Activated B cell treated with CpG ODN at 0.5 μM for 24 hours (primary cell): ENCODE measurements at regions of chr14 and their contacts with region 1.

Region 1: GRCh38 chr14:100192672-100193416 is 33.4 kb upstream of the DEGS2 start:
- DNase-seq: peak; percentile 98
- ATAC-seq: peak; percentile 99
- H3K4me3 Mint-ChIP-seq: peak overlapping the region; percentile 75
- H3K27ac Mint-ChIP-seq: peak overlapping the region; percentile 85
- H3K4me1 Mint-ChIP-seq: peaks cover 5% of the 10 kb centered on the region
- H3K27me3 Mint-ChIP-seq: no peaks in the 10 kb centered on the region
- CTCF ChIP-seq: no peak

Region 2: DNA sequence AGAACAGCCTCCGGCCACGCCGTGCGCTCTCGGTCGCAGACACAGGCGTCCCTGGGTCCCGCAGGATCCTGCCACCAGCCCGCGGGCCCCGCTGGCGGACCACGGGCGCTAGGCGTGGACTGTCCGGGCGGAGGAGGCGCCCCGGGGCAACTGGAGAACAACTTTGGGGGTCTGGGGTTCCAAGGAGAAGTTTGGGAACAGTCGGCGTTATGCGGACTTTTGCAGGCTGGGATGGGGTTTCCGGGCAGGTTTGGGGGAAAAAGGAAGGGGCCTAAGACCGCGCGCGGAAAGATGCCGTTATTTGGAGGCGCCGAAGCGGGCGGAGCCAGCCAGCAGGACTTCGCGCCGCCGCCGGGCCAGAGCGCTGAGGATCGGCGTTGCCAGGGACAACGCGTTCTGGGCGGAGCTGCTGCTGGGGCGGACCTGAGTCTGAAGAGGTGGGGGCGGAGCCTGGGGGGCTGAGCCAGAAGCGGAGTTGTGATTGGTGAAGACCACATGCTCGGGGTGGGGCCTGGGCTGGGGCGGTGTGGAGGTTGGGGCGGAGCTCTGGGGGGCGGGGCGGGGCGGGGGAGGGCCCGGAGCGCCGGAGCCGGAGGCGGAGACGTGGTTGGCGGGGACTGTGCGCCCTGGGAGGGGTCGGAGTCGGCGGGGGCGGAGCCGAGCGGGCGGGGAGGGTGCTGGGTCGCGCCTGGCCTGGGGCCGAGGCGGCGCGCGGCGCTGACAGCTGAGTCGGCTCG is 509.1 kb before region 1 on chr14 and contains the start of gene CYP46A1:
- CTCF ChIA-PET with region 1: no interaction called
- POLR2A ChIA-PET with region 1: interaction called, 5 read pairs
- intact Hi-C with region 1: loop called (anchors 2 kb)
- DNase-seq: peak; percentile 98
- ATAC-seq: peak; percentile 96
- H3K4me3 Mint-ChIP-seq: peak within 1 kb of the TSS; percentile 92
- H3K27ac Mint-ChIP-seq: peak within 1 kb of the TSS; percentile 86
- H3K4me1 Mint-ChIP-seq: peaks cover 26% of the 10 kb centered on the region
- H3K27me3 Mint-ChIP-seq: peaks cover 34% of the 10 kb centered on the region
- CTCF ChIP-seq: no peak
- total RNA-seq, gene CYP46A1: 0.07 TPM in 1 of 2 replicates, not detected in the other

Region 3: DNA sequence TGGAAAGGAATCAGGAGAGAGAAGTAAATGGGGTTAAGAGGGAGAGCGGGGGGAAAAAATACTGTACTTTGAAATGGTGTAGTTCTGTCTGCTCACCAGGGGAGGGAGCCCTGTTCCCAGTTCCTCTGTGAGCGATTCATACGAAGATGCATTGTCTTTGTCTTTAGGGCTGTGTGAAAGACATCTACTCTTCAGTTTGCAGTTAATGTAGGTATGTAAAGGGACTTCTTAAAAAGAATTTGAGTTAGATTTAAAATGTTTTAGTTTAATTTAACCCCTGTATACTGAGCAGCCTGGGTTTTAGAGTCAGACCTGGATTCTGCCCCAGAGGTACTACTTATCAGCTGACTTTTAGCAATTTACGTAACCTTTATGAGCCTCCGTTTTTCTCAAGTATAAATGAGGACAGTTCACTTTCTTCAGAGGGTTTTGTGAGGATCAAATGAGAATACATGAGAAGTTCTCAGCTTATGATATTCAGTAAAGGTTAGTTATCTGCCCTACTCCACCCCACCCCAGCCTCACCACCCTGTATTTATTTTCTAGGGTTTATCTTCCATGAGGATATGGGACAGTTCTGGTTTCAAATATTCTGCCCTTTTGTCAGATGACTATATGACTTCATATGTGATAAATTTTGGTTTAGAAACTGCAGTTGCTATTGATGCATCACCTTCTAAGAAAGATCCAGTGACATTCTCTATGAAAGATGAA is 210.2 kb before region 1 on chr14:
- CTCF ChIA-PET with region 1: interaction called, 36 read pairs
- POLR2A ChIA-PET with region 1: interaction called, 4 read pairs
- intact Hi-C with region 1: loop called (anchors 1 kb)
- DNase-seq: no peak
- ATAC-seq: peak; percentile 98
- H3K4me3 Mint-ChIP-seq: no peak overlapping the region
- H3K27ac Mint-ChIP-seq: no peak overlapping the region
- H3K4me1 Mint-ChIP-seq: no peaks in the 10 kb centered on the region
- H3K27me3 Mint-ChIP-seq: no peaks in the 10 kb centered on the region
- CTCF ChIP-seq: peak; percentile 88

Region 4: DNA sequence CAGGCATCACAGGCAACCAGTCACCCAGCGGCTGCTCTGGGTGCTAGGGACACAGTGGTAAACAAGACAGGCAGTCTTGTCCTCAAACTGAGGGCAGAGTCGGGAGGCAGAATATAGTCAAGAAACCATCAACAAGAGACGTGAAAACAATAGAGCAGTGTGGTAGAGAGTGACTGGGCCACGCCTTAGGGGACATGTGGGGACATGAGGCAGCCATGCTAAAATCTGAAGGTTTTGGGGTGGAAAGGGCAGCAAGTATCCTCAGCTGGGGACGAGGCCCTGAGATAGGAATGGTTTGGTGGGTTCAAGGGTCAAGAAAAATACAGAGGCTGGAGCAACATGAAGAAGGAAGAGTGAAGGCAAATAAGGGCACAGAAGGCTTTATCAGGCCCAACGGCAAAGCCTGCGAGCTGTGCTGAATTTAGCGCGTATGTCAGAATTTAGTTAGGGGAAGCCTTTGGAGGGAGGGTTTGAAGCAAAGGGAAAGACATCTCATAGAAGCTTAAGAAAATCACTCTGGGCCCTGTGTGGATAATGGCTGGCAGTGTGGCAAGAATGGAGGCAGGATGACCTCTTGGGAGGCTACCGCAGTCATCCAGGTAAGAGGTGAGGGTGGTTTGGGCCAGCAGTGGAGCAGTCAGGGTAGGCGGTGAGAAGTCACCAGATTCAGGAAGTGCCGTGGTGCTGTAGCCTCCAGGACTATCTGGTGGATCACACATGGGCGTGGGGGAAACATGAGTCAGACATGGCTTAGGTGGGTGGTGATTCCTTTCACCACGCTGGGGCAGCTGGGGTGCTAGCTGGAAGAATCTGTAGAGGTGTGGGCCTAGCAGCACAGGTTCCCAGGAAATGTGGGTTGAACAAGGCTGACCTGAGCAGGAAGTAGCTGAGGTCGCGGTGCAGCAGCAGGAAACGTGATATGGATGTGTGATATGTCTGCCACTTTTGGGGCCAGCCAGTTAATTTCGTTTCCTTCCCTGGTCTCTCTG is 124.6 kb before region 1 on chr14:
- CTCF ChIA-PET with region 1: interaction called, 16 read pairs
- POLR2A ChIA-PET with region 1: interaction called, 14 read pairs
- intact Hi-C with region 1: loop called (anchors 1 kb)
- DNase-seq: peak; percentile 60
- ATAC-seq: peak; percentile 47
- H3K4me3 Mint-ChIP-seq: peak overlapping the region; percentile 94
- H3K27ac Mint-ChIP-seq: peak overlapping the region; percentile 98
- H3K4me1 Mint-ChIP-seq: peaks cover 95% of the 10 kb centered on the region
- H3K27me3 Mint-ChIP-seq: no peaks in the 10 kb centered on the region
- CTCF ChIP-seq: no peak

Region 5: DNA sequence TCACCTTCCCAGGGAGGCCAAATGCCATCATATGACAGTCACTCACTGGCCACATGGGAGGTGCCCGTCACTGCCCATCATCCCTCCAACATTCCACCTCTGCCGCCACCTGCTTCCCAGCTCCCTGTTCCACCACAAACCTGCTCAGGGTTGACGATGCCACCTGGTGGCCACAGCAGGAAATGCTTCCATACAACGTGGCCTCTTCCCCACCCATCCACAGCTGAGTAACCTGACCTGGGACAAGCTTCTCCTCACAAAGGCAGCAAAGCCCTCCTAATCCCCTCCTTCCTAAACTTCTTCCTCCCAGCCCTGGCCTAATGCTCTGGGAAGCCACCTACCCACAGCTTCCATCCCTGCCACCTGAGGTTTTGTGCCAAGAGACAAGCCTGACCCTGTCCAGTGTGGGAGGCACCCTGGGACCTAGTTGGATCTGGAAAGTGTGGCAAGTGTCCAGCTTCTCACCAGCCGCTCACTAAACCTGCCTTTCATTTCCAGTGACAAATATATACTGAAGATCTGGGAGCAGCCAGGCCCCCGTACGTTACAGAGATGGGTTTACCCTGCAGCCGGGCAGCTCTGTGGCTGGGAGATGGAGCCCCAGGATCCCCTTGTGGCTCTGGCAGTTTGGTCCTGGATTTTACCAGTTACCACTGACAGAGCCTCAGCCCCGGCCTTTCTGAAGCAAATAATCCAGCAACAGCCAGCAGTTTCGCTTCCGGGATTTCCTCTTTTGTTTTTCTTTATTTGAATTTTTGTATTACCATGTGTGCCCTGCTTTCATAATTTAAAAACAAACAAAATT is 37.6 kb before region 1 on chr14:
- CTCF ChIA-PET with region 1: interaction called, 7 read pairs
- POLR2A ChIA-PET with region 1: interaction called, 7 read pairs
- intact Hi-C with region 1: loop called (anchors 1 kb)
- DNase-seq: no peak
- ATAC-seq: no peak
- H3K4me3 Mint-ChIP-seq: no peak overlapping the region
- H3K27ac Mint-ChIP-seq: no peak overlapping the region
- H3K4me1 Mint-ChIP-seq: peaks cover 31% of the 10 kb centered on the region
- H3K27me3 Mint-ChIP-seq: no peaks in the 10 kb centered on the region
- CTCF ChIP-seq: no peak

Region 6: GRCh38 chr14:100239840-100240724 is 47.2 kb after region 1 on chr14:
- CTCF ChIA-PET with region 1: interaction called, 8 read pairs
- POLR2A ChIA-PET with region 1: interaction called, 5 read pairs
- intact Hi-C with region 1: loop called (anchors 1 kb)
- DNase-seq: peak; percentile 86
- ATAC-seq: peak; percentile 48
- H3K4me3 Mint-ChIP-seq: peak overlapping the region; percentile 87
- H3K27ac Mint-ChIP-seq: peak overlapping the region; percentile 90
- H3K4me1 Mint-ChIP-seq: peaks cover 61% of the 10 kb centered on the region
- H3K27me3 Mint-ChIP-seq: no peaks in the 10 kb centered on the region
- CTCF ChIP-seq: no peak

Region 7: DNA sequence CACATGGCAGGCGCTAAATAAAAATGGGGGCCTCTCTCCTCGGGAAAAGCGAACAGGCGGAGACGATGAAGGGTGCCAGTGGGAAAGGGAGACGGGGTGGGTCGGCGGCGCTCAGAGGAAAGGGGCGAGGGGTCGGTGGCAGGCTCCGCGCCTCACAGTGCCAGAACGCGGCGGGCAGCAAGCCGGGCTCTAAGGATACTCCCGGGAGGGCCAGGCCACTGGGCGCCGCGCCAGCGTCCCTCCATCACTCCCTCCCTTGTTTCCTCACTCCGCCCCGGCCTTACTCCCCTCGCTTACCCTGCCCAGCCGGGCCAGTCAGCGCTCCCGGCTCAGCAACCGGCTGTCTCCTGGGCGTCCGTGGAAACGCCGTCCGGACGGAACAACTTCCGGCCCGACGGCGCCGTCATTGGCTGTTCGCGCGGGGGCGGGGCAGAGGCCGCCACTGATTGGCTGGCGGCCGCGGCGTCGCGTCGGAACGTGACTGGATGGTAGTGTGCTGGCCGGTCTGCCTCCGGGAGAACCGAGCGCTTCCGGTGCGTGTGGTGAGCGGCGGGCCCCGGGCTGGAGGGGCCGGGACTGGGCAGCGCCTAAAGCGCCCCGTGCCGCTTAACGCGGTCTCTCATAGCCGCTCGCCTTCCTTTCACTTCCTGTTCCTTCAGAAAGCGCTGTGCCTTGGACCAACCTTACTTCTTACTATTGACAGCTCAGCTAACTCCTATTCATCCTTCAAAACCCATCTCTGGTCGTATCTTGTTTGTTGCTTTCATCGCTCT is 183.3 kb after region 1 on chr14:
- CTCF ChIA-PET with region 1: no interaction called
- POLR2A ChIA-PET with region 1: interaction called, 6 read pairs
- intact Hi-C with region 1: loop called (anchors 1 kb)
- DNase-seq: peak; percentile 93
- ATAC-seq: peak; percentile 81
- H3K4me3 Mint-ChIP-seq: peak within 1 kb of the TSS; percentile 95
- H3K27ac Mint-ChIP-seq: peak within 1 kb of the TSS; percentile 95
- H3K4me1 Mint-ChIP-seq: peaks cover 48% of the 10 kb centered on the region
- H3K27me3 Mint-ChIP-seq: no peaks in the 10 kb centered on the region
- CTCF ChIP-seq: no peak